PC-3 (cell line): ENCODE measurements at regions of chr2 and their contacts with region 1.

Region 1: GRCh38 chr2:96359310-96359709 is 23.7 kb downstream of the NCAPH start:
- DNase-seq: peak; percentile 20
- ATAC-seq: no peak
- H3K4me3 ChIP-seq: no peak overlapping the region
- H3K27ac ChIP-seq: no peak overlapping the region
- H3K4me1 ChIP-seq: no peaks in the 10 kb centered on the region
- H3K27me3 ChIP-seq: no peaks in the 10 kb centered on the region
- CTCF ChIP-seq: peak; percentile 53

Region 2: GRCh38 chr2:96201338-96201737 is 158.0 kb before region 1 on chr2:
- CTCF ChIA-PET with region 1: no interaction called
- POLR2A ChIA-PET with region 1: interaction called, 10 read pairs
- intact Hi-C with region 1: no loop called
- DNase-seq: no peak
- ATAC-seq: no peak
- H3K4me3 ChIP-seq: no peak overlapping the region
- H3K27ac ChIP-seq: no peak overlapping the region
- H3K4me1 ChIP-seq: peaks cover 13% of the 10 kb centered on the region
- H3K27me3 ChIP-seq: no peaks in the 10 kb centered on the region
- CTCF ChIP-seq: no peak